Activated CD4-positive, alpha-beta memory T cell treated with anti-CD3 and anti-CD28 coated beads, Interleukin-2, amount 10 ng/mL, durations not matched to agents 7 days and 5 days (primary cell): ENCODE measurements at regions of chr7 and their contacts with region 1.

Region 1: GRCh38 chr7:127347567-127348246 is 44.8 kb downstream of the ZNF800 start:
- DNase-seq: peak; percentile 73
- H3K4me3 Mint-ChIP-seq: peak overlapping the region; percentile 33
- H3K27ac Mint-ChIP-seq: no peak overlapping the region
- H3K4me1 Mint-ChIP-seq: peaks cover 6% of the 10 kb centered on the region
- H3K27me3 Mint-ChIP-seq: peaks cover 17% of the 10 kb centered on the region

Region 2: GRCh38 chr7:126760914-126761577 is 586.7 kb before region 1 on chr7:
- CTCF ChIA-PET with region 1: no interaction called
- POLR2A ChIA-PET with region 1: no interaction called
- DNase-seq: no peak
- H3K4me3 Mint-ChIP-seq: no peak overlapping the region
- H3K27ac Mint-ChIP-seq: no peak overlapping the region
- H3K4me1 Mint-ChIP-seq: no peaks in the 10 kb centered on the region
- H3K27me3 Mint-ChIP-seq: peaks cover 2% of the 10 kb centered on the region

Region 3: GRCh38 chr7:127189886-127190285 is 157.8 kb before region 1 on chr7:
- CTCF ChIA-PET with region 1: no interaction called
- POLR2A ChIA-PET with region 1: no interaction called
- DNase-seq: no peak
- H3K4me3 Mint-ChIP-seq: no peak overlapping the region
- H3K27ac Mint-ChIP-seq: no peak overlapping the region
- H3K4me1 Mint-ChIP-seq: no peaks in the 10 kb centered on the region
- H3K27me3 Mint-ChIP-seq: peaks cover 4% of the 10 kb centered on the region

Region 4: DNA sequence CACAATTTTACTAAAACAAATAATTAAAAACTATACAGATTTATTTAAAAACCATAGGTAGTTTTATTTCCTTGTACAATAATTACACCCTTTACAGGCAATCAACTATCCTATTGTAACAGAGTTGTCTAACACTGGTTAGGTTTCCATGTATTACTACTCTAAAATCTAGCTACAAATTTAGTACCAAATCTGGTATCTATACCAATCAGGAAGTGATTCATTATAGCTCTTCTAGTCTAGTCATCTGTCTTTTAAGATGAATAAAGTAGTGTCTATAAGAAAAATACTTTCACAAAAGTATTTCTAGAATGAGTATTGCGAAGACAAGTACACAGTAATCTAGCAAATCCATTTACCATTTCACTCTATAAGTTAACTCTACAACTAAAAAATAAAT is 27.9 kb after region 1 on chr7:
- CTCF ChIA-PET with region 1: interaction called, 10 read pairs
- POLR2A ChIA-PET with region 1: no interaction called
- DNase-seq: no peak
- H3K4me3 Mint-ChIP-seq: no peak overlapping the region
- H3K27ac Mint-ChIP-seq: no peak overlapping the region
- H3K4me1 Mint-ChIP-seq: peaks cover 37% of the 10 kb centered on the region
- H3K27me3 Mint-ChIP-seq: no peaks in the 10 kb centered on the region

Region 5: DNA sequence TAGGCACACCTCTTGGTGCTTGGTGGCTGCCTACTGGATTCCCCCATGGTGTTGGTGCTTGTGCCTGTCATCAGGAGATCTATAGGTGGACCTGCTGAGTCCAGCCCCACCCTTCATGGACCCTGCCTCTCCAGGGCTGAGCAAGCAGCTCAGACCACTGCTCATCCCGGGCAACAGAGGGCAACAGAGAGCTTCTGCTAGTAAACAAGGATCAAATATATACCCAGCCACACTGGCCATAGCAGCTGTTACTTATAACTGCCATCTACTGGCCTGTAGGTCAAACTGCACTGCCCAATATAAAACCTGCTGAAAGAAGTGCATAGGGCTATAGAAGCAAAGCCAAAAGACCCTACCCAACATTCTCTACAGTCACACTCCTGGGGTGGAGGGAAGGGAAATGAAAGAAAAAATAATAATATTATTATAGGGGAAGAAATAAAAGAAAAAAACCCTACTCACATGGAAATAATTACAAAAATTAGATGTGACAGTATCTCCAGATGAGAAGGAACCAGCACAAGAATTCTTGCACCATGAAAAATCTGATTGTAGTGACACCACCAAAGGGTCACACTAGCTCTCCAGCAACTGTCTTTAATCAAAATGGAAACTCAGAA is 99.7 kb after region 1 on chr7:
- CTCF ChIA-PET with region 1: interaction called, 35 read pairs
- POLR2A ChIA-PET with region 1: no interaction called
- DNase-seq: peak; percentile 60
- H3K4me3 Mint-ChIP-seq: no peak overlapping the region
- H3K27ac Mint-ChIP-seq: no peak overlapping the region
- H3K4me1 Mint-ChIP-seq: peaks cover 12% of the 10 kb centered on the region
- H3K27me3 Mint-ChIP-seq: peaks cover 36% of the 10 kb centered on the region